PC-3 (cell line): ENCODE measurements at regions of chr7 and their contacts with region 1.

Region 1: DNA sequence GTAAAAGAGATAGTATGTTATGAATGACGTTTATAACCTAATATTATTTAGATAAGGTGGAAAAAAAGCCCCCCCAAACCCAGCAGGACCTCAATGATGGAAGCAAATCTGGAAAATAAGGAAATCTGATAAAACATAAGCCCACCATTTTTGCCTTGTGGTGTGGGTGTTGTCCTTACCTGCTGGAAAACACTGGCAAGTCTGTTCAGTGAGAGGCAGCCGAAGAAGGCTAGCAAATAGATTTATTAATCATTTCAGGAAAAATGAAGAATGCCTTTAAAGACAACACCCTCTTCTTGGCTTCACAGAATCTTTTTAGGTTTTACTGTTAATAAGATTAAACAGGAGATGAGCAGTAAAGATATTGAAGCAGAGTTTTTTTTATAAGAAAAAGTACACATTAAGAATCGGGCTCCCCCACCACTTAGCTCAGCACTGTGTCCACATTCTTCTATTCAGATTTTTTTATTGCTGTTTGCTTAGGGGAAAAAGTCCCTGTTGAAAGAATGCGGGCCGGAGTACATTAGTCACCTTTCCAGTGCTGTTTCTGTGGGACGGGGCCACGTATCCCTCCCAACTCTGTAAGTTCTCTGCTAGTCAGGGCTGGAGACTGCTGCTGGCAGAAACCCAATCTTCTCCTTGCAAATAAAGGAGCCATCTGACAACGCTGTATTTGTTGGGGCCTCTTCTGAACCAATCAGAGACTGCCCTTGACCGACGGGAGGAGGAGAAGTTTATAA is 104.1 kb downstream of the EVX1 start:
- DNase-seq: peak; percentile 99
- ATAC-seq: peak; percentile 91
- H3K4me3 ChIP-seq: peak overlapping the region; percentile 57
- H3K27ac ChIP-seq: peak overlapping the region; percentile 92
- H3K4me1 ChIP-seq: peaks cover 43% of the 10 kb centered on the region
- H3K27me3 ChIP-seq: no peaks in the 10 kb centered on the region
- CTCF ChIP-seq: no peak

Region 2: GRCh38 chr7:27242555-27243339 is 104.0 kb before region 1 on chr7 and contains the start of gene EVX1:
- CTCF ChIA-PET with region 1: no interaction called
- POLR2A ChIA-PET with region 1: no interaction called
- intact Hi-C with region 1: loop called (anchors 2 kb)
- DNase-seq: no peak
- ATAC-seq: peak; percentile 53
- H3K4me3 ChIP-seq: peak within 1 kb of the TSS; percentile 89
- H3K27ac ChIP-seq: no peak within 1 kb of the TSS
- H3K4me1 ChIP-seq: peaks cover 6% of the 10 kb centered on the region; the same call in 1 of the 2 replicates
- H3K27me3 ChIP-seq: peaks cover 13% of the 10 kb centered on the region
- CTCF ChIP-seq: no peak
- total RNA-seq, gene EVX1: 0.33 and 0.35 TPM in 2 replicates

Region 3: DNA sequence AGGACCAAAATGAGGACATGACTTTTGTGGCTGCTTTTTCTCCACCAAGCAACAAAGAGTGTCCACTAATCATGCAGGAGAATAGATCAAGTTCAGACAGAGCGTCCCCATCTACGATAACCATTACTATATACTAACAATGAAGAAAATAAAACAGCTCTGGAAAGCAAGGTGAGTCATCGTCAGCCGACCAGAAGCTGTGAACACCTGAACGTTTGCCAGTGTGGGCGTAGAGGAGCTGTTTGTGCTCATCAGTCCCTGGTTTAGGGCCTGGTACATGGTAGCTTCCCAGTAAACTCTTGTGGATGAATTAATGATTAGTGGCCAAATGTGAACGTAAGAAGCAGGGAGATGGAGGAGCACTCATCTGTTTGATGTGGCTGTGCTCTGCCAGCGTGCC is 76.6 kb after region 1 on chr7:
- CTCF ChIA-PET with region 1: no interaction called
- POLR2A ChIA-PET with region 1: no interaction called
- intact Hi-C with region 1: loop called (anchors 1 kb)
- DNase-seq: peak; percentile 71
- ATAC-seq: peak; percentile 60
- H3K4me3 ChIP-seq: no peak overlapping the region
- H3K27ac ChIP-seq: no peak overlapping the region
- H3K4me1 ChIP-seq: peaks cover 46% of the 10 kb centered on the region
- H3K27me3 ChIP-seq: no peaks in the 10 kb centered on the region
- CTCF ChIP-seq: no peak

Region 4: DNA sequence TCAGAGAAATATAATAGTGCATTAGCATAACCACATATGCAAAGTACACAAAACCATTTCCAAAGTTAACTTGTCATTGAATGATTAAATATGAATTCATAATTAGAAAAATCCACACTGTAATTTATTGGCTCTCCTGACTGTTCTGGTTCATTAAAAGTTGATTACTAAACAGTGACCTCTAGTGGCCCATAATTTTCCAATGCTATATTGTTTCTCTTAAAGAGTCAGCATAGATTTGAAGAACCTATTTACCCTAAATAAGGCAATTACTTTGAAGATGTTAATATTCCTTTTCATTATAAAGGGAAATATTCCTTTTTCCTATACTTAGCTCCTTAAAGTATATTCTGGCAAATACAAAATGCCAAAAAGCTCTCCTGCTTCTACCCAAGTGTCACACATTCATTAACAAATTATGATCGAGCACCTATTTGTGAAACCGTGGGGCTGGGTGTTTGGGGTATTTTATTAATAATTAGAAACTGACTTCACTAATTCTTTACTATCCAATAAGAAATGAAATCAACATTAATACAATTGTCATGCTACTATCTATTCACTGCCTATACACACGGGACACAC is 229.8 kb after region 1 on chr7:
- CTCF ChIA-PET with region 1: no interaction called
- POLR2A ChIA-PET with region 1: no interaction called
- intact Hi-C with region 1: loop called (anchors 1 kb)
- DNase-seq: peak; percentile 79
- ATAC-seq: peak; percentile 56
- H3K4me3 ChIP-seq: no peak overlapping the region
- H3K27ac ChIP-seq: no peak overlapping the region
- H3K4me1 ChIP-seq: peaks cover 11% of the 10 kb centered on the region
- H3K27me3 ChIP-seq: no peaks in the 10 kb centered on the region
- CTCF ChIP-seq: peak; percentile 80